HepG2 (cell line): ENCODE measurements at regions of chr4 and their contacts with region 1.

Region 1: DNA sequence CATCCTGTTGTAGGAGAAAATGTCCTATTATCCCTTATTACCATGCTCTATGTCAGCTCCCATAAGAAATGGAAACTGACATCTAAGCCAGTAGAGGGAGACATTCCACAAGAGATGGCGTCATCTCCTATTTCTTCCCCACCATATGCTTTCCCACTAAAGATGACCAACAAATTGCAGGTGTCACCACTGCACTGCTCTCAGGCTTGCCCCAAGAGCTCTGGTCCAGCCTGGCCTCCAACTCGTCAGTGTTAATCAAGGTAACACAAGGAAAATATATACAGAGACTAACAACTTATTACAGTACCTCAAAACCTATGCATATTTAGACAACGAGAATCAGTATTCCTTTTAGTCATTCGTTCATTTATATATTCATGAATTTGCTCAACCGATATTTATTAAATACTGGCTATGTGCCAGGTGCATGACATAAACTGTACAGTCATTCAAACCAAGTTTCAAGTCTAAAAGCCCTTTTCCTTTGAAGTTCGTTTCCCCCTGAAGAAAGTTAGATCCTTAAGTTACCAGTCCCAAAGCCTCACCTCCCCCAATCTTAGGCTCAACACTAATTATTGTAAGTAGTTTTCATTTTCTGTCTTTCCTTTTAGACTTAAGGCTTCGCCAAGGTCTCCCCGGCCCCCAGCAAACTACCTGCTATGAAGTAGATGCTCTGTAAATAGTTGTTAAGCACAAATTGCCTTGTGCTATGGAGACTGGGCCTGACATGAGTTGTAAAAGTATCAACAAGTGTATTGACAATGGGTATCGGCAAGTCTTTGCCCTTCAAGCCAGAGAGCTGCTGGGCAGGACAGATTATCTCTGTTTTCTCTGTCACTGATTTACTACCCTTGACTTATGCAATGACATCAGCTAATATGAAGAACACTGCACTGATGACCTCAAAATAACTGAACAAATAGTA is 3.1 kb upstream of the FGB start:
- DNase-seq: peak; percentile 96
- ATAC-seq: peak; percentile 94
- H3K4me3 ChIP-seq: peak overlapping the region in 2 of 3 experiments; percentile 13 to 32; a peak in 2 of 6 replicates
- H3K27ac ChIP-seq: peak overlapping the region; percentile 71
- H3K4me1 ChIP-seq: peaks cover 46% of the 10 kb centered on the region
- H3K27me3 ChIP-seq: no peaks in the 10 kb centered on the region; a peak in 1 of 5 replicates
- CTCF ChIP-seq: peak; percentile 96
- EP300 ChIP-seq: peak; percentile 47 to 96; a peak in 2 of 4 replicates
- POLR2A ChIP-seq: no peak
- RAD21 ChIP-seq: peak; percentile 96

Region 2: DNA sequence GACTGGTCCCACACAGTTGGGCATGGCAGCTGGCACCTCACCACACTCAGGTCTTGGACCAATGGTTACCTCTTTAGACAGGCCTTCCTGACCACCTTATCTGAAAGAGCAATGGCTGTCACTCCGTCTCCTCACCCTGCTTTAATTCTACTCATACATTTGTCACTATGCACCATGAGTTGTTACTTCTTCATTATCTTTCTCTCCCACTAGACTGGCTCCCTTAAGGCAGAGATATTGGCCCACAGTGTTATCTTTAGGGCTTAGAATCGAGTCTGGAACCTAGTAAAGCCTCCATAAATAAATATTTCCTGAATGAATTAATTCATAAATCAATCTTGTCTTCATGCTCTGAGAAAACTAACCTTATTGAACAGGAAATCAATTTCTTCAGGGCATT is 114.8 kb before region 1 on chr4:
- CTCF ChIA-PET with region 1: no interaction called
- POLR2A ChIA-PET with region 1: no interaction called
- in situ Hi-C with region 1: no loop called
- intact Hi-C with region 1: no loop called
- DNase-seq: no peak
- ATAC-seq: no peak
- H3K4me3 ChIP-seq: no peak overlapping the region
- H3K27ac ChIP-seq: no peak overlapping the region
- H3K4me1 ChIP-seq: no peaks in the 10 kb centered on the region
- H3K27me3 ChIP-seq: no peaks in the 10 kb centered on the region; a peak in 1 of 5 replicates
- CTCF ChIP-seq: no peak
- EP300 ChIP-seq: no peak
- POLR2A ChIP-seq: no peak
- RAD21 ChIP-seq: no peak

Region 3: GRCh38 chr4:154578919-154579318 is 19.2 kb after region 1 on chr4:
- CTCF ChIA-PET with region 1: interaction called, 4 read pairs
- POLR2A ChIA-PET with region 1: interaction called, 16 read pairs
- in situ Hi-C with region 1: no loop called
- intact Hi-C with region 1: loop called (anchors 1 kb)
- DNase-seq: no peak
- ATAC-seq: no peak
- H3K4me3 ChIP-seq: no peak overlapping the region
- H3K27ac ChIP-seq: no peak overlapping the region
- H3K4me1 ChIP-seq: peaks cover 31% of the 10 kb centered on the region
- H3K27me3 ChIP-seq: no peaks in the 10 kb centered on the region
- CTCF ChIP-seq: no peak
- EP300 ChIP-seq: no peak
- POLR2A ChIP-seq: no peak
- RAD21 ChIP-seq: no peak

Region 4: GRCh38 chr4:154590329-154591006 is 30.7 kb after region 1 on chr4 and contains the start of gene FGA:
- CTCF ChIA-PET with region 1: no interaction called
- POLR2A ChIA-PET with region 1: interaction called, 24 read pairs
- in situ Hi-C with region 1: no loop called
- intact Hi-C with region 1: loop called (anchors 1 kb)
- DNase-seq: peak; percentile 99
- ATAC-seq: peak; percentile 98
- H3K4me3 ChIP-seq: peak within 1 kb of the TSS; percentile 62 to 72 (median 68)
- H3K27ac ChIP-seq: peak within 1 kb of the TSS; percentile 74
- H3K4me1 ChIP-seq: peaks cover 96% of the 10 kb centered on the region
- H3K27me3 ChIP-seq: no peaks in the 10 kb centered on the region
- CTCF ChIP-seq: no peak
- EP300 ChIP-seq: peak; percentile 79 to 100; a peak in 3 of 4 replicates
- POLR2A ChIP-seq: peak; percentile 82 to 88
- RAD21 ChIP-seq: no peak; the same call in 1 of the 2 replicates
- total RNA-seq, gene FGA: 743 and 1,523 TPM in 2 replicates

Region 5: DNA sequence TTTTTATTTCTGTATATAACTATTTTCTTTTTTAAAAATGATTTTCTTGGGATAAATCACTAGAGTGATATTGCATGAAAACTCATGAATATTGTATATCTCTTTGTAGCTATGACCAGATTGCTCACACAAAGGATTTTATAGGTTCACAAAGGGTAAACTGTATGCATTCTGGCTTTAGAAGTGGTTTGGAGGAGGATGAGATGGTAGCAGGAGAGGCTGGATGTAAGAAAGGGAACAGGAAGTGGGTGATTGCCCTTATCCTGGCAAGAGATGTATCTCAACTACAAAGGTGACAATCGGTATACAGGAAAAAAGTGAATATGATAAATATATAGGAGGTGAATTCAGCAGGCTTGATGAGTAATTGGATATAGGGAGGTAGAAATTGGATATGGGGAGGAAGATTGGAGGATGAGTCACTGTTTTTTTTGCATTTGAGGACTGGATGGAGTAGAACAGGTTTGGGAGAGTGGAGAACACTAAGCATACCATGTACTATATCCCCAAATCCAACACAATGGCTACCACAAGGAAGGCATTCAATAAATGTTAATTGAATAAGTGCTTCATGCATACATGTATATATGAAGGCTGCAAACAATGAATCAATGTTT is 42.8 kb after region 1 on chr4:
- CTCF ChIA-PET with region 1: interaction called, 3 read pairs
- POLR2A ChIA-PET with region 1: interaction called, 34 read pairs
- in situ Hi-C with region 1: no loop called
- intact Hi-C with region 1: loop called (anchors 1 kb)
- DNase-seq: no peak
- ATAC-seq: peak; percentile 8; the same call in 1 of the 3 replicates
- H3K4me3 ChIP-seq: no peak overlapping the region
- H3K27ac ChIP-seq: peak overlapping the region; percentile 0
- H3K4me1 ChIP-seq: peaks cover 87% of the 10 kb centered on the region
- H3K27me3 ChIP-seq: no peaks in the 10 kb centered on the region
- CTCF ChIP-seq: no peak
- EP300 ChIP-seq: no peak
- POLR2A ChIP-seq: peak; percentile 27 to 40; a peak in 3 of 4 replicates
- RAD21 ChIP-seq: no peak

Region 6: GRCh38 chr4:154618708-154619315 is 59.1 kb after region 1 on chr4:
- CTCF ChIA-PET with region 1: interaction called, 233 read pairs
- POLR2A ChIA-PET with region 1: interaction called, 127 read pairs
- in situ Hi-C with region 1: loop called (anchors 5 kb)
- intact Hi-C with region 1: loop called (anchors 1 kb)
- DNase-seq: peak; percentile 80
- ATAC-seq: peak; percentile 76
- H3K4me3 ChIP-seq: peak overlapping the region in 2 of 3 experiments; percentile 17 to 27; a peak in 3 of 6 replicates
- H3K27ac ChIP-seq: peak overlapping the region; percentile 48
- H3K4me1 ChIP-seq: peaks cover 59% of the 10 kb centered on the region
- H3K27me3 ChIP-seq: no peaks in the 10 kb centered on the region; a peak in 1 of 5 replicates
- CTCF ChIP-seq: peak; percentile 90
- EP300 ChIP-seq: 0 out of 4 replicates have a peak, but pooled peaks of 1 of the 2 experiments have one; percentile 3
- POLR2A ChIP-seq: no peak
- RAD21 ChIP-seq: peak; percentile 94